ENCODE measurements at regions of chr2 and their contacts with region 1.

Region 1: DNA sequence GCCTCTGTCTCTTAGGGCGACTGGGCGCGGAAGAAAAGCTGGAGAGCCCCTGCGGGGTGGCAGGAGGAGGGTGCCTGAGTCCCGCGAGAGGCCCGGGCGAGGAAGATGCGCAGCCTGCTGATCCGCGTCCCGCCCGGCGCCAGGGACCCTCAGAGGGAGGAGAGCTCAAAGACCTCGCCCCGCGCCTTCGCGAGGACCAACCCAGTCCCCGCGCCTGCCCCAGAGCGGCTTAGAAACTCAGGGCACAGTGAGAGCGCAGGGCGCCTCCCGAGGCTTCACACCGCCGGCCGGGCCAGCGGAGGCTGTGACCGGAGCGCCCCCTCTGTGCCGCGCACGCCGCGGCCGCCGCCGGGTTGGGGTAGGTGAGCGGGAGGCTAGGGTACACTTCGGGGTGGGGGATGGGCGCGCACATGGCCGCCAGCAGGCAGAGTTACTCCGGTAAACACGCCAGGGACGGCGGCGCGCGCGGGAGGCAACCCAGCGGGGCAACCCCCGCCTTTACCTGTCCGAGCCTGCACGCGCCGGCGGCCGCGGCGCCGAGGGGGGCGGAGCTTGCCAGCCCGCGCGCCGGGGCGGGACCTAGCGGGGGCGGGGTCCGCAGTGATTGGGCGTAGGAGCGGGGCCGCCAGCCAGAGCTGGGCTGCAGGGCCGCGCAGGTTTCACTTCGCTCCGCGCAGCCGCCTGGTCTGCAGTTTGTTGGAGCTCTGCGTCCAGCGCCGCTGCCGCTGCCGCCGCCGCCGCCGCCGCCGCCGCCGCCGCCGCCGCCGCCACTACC is at the start of gene BCL2L11:
- DNase-seq: peak; percentile 85 to 94
- ATAC-seq: peak; percentile 74 to 86 (median 80)
- H3K4me3 ChIP-seq: peak within 1 kb of the TSS; percentile 83
- H3K4me3 Mint-ChIP-seq: peak within 1 kb of the TSS; percentile 95
- H3K27ac ChIP-seq: peak within 1 kb of the TSS; percentile 59
- H3K27ac Mint-ChIP-seq: peak within 1 kb of the TSS; percentile 86 to 89
- H3K4me1 ChIP-seq: peaks cover 63% of the 10 kb centered on the region
- H3K4me1 Mint-ChIP-seq: peaks cover 47 to 56% of the 10 kb centered on the region in 2 donors
- H3K27me3 ChIP-seq: peaks cover 35% of the 10 kb centered on the region
- H3K27me3 Mint-ChIP-seq: peaks cover 39 to 42% of the 10 kb centered on the region in 2 donors
- CTCF ChIP-seq: no peak
- total RNA-seq, gene BCL2L11: 27.4 to 56.9 (median 39.9) TPM

Region 2: GRCh38 chr2:110677530-110678456 is 442.6 kb before region 1 on chr2 and contains the start of gene BUB1:
- intact Hi-C with region 1: loop called (anchors 5 kb)
- DNase-seq: peak; percentile 94 to 98
- ATAC-seq: peak; percentile 75 to 86 (median 77)
- H3K4me3 ChIP-seq: peak within 1 kb of the TSS; percentile 71
- H3K4me3 Mint-ChIP-seq: peak within 1 kb of the TSS; percentile 98
- H3K27ac ChIP-seq: peak within 1 kb of the TSS; percentile 67
- H3K27ac Mint-ChIP-seq: peak within 1 kb of the TSS; percentile 93 to 95
- H3K4me1 ChIP-seq: peaks cover 25% of the 10 kb centered on the region
- H3K4me1 Mint-ChIP-seq: peaks cover 36 to 40% of the 10 kb centered on the region in 2 donors
- H3K27me3 ChIP-seq: no peaks in the 10 kb centered on the region
- H3K27me3 Mint-ChIP-seq: peaks cover 15 to 21% of the 10 kb centered on the region in 2 donors
- CTCF ChIP-seq: no peak
- total RNA-seq, gene BUB1: 2.3 to 4.2 (median 2.7) TPM

Region 3: DNA sequence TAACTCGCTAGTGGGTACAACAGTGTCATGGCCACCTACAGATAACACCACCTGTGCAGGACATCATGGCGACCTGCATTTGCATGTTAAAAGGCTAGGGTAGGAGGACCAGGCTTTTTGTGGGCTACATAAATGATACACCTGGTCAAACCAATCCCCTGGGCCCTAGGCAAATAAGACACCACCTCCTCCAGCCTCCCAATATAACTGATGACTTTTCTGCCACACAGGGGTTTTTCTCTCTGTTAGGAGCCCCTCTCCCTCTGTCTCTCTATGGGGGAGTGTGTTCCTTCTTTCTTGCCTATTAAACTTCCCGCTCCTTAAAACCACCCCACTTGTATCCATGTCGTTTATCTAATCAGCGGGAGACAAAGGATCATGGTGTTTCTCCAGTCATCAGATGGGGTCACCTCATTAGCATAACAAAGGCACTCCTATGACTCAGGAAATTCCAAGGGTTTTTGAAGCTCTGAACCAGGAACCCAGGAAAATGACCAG is 431.8 kb before region 1 on chr2:
- intact Hi-C with region 1: no loop called
- DNase-seq: no peak
- ATAC-seq: no peak
- H3K4me3 ChIP-seq: no peak overlapping the region
- H3K4me3 Mint-ChIP-seq: no peak overlapping the region
- H3K27ac ChIP-seq: no peak overlapping the region
- H3K27ac Mint-ChIP-seq: no peak overlapping the region
- H3K4me1 ChIP-seq: no peaks in the 10 kb centered on the region
- H3K4me1 Mint-ChIP-seq: peaks cover 0 to 5% of the 10 kb centered on the region in 2 donors
- H3K27me3 ChIP-seq: no peaks in the 10 kb centered on the region
- H3K27me3 Mint-ChIP-seq: peaks cover 33 to 58% of the 10 kb centered on the region in 2 donors
- CTCF ChIP-seq: no peak

Region 4: GRCh38 chr2:110812726-110813645 is 307.5 kb before region 1 on chr2:
- intact Hi-C with region 1: loop called (anchors 5 kb)
- DNase-seq: no peak
- ATAC-seq: peak in 1 of 3 donors; percentile 21
- H3K4me3 ChIP-seq: no peak overlapping the region
- H3K4me3 Mint-ChIP-seq: no peak overlapping the region
- H3K27ac ChIP-seq: no peak overlapping the region
- H3K27ac Mint-ChIP-seq: peak overlapping the region in 1 of 2 donors; percentile 67
- H3K4me1 ChIP-seq: peaks cover 8% of the 10 kb centered on the region
- H3K4me1 Mint-ChIP-seq: peaks cover 6 to 12% of the 10 kb centered on the region in 2 donors
- H3K27me3 ChIP-seq: no peaks in the 10 kb centered on the region
- H3K27me3 Mint-ChIP-seq: peaks cover 0 to 11% of the 10 kb centered on the region in 2 donors
- CTCF ChIP-seq: no peak

Region 5: DNA sequence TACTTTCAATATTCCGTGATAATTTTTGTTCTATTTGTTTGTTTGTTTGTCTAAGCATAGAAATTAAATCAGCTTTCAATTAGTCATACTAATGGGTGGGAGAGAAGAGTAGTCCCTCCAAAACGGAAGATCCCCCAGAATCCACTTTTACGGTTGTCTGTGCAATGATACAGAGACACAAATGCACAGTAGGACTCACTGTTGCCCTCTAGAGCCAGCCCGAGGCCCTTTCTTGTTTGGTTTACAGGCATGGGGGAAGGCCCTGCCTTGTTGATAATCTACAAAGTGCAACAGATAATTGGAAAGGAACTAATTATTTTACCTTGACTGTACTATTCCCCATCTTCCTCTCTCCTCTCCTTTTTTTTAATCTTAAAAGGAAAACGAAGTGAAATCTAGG is 266.9 kb before region 1 on chr2:
- intact Hi-C with region 1: loop called (anchors 2 kb)
- DNase-seq: peak in 1 of 2 donors; percentile 80
- ATAC-seq: peak; percentile 23 to 50 (median 23)
- H3K4me3 ChIP-seq: no peak overlapping the region
- H3K4me3 Mint-ChIP-seq: peak overlapping the region; percentile 88
- H3K27ac ChIP-seq: no peak overlapping the region
- H3K27ac Mint-ChIP-seq: peak overlapping the region; percentile 92 to 94
- H3K4me1 ChIP-seq: peaks cover 76% of the 10 kb centered on the region
- H3K4me1 Mint-ChIP-seq: peaks cover 86 to 93% of the 10 kb centered on the region in 2 donors
- H3K27me3 ChIP-seq: no peaks in the 10 kb centered on the region
- H3K27me3 Mint-ChIP-seq: peaks cover 0 to 14% of the 10 kb centered on the region in 2 donors
- CTCF ChIP-seq: peak; percentile 78

Region 6: DNA sequence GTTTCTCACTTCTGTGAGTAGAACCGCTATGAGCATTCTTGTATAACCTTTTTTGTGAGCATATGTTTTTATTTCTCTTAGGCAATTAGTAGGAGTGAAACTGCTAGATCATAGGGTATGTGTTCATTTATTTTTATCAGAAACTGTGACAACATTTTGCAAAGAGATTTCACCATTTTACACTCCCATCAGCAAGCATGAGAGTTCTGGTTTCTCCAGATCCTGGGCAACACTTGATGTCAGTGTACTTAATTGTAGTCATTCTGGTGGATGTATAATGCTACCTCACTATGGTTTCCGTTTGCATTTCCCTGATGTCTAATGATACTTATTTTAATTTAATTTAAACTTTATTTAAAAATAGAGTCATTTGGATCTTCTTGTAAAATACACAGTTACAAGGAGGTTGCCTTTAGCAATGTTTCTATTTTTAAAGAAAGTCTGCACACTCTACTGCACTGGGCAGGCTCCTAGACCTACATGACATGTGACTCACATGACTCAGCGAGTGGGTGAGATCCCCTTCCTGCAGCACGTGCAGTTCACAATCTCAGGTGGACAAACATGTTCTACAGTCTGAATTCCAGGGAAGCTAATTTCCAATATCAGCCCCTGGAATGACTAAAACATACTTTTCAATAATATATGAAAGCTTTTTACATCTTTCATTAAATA is 126.7 kb before region 1 on chr2:
- intact Hi-C with region 1: loop called (anchors 10 kb)
- DNase-seq: peak in 1 of 2 donors; percentile 50
- ATAC-seq: peak; percentile 84 to 89 (median 88)
- H3K4me3 ChIP-seq: no peak overlapping the region
- H3K4me3 Mint-ChIP-seq: peak overlapping the region; percentile 73
- H3K27ac ChIP-seq: peak overlapping the region; percentile 26
- H3K27ac Mint-ChIP-seq: peak overlapping the region; percentile 79 to 86
- H3K4me1 ChIP-seq: peaks cover 19% of the 10 kb centered on the region
- H3K4me1 Mint-ChIP-seq: peaks cover 30 to 32% of the 10 kb centered on the region in 2 donors
- H3K27me3 ChIP-seq: no peaks in the 10 kb centered on the region
- H3K27me3 Mint-ChIP-seq: no peaks in the 10 kb centered on the region
- CTCF ChIP-seq: no peak

Region 7: GRCh38 chr2:111705711-111706336 is 585.4 kb after region 1 on chr2:
- intact Hi-C with region 1: loop called (anchors 5 kb)
- DNase-seq: peak in 1 of 2 donors; percentile 41
- ATAC-seq: peak; percentile 52 to 69 (median 55)
- H3K4me3 ChIP-seq: no peak overlapping the region
- H3K4me3 Mint-ChIP-seq: no peak overlapping the region
- H3K27ac ChIP-seq: no peak overlapping the region
- H3K27ac Mint-ChIP-seq: peak overlapping the region in 1 of 2 donors; percentile 60
- H3K4me1 ChIP-seq: peaks cover 20% of the 10 kb centered on the region
- H3K4me1 Mint-ChIP-seq: peaks cover 18 to 24% of the 10 kb centered on the region in 2 donors
- H3K27me3 ChIP-seq: no peaks in the 10 kb centered on the region
- H3K27me3 Mint-ChIP-seq: no peaks in the 10 kb centered on the region
- CTCF ChIP-seq: no peak

Measured in natural killer cell (primary cell).